ENCODE measurements at regions of chr11 and their contacts with region 1.

Region 1: DNA sequence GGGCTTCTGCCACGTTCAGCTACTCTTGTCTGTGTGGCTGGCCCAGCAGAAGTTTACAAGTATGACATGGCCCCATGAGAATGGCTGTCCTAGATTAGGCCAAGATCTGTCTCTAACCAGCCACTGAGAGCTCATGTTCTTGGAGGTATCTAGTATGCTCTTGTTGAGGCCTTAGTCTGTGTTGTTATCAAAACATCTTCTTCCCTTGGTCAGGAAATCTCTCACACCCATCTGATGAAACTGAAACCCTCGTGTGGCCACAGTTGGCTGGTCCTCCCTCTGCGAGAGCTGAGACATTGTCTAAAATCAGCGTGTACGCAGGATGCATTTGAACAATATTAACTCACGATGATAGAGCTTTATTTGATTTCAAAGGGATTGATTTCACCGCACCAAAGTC is 109.0 kb upstream of the NNMT start:
- DNase-seq: peak; percentile 84
- ATAC-seq: peak; percentile 82
- H3K4me3 ChIP-seq: peak overlapping the region in 2 of 5 experiments; percentile 10 to 17
- H3K4me3 Mint-ChIP-seq: peak overlapping the region; percentile 77
- H3K27ac ChIP-seq: peak overlapping the region; percentile 92 to 98
- H3K27ac Mint-ChIP-seq: peak overlapping the region; percentile 98
- H3K4me1 ChIP-seq: peaks cover 67 to 74% of the 10 kb centered on the region in 2 donors
- H3K4me1 Mint-ChIP-seq: peaks cover 73% of the 10 kb centered on the region
- H3K27me3 ChIP-seq: no peaks in the 10 kb centered on the region
- H3K27me3 Mint-ChIP-seq: no peaks in the 10 kb centered on the region
- CTCF ChIP-seq: no peak

Region 2: DNA sequence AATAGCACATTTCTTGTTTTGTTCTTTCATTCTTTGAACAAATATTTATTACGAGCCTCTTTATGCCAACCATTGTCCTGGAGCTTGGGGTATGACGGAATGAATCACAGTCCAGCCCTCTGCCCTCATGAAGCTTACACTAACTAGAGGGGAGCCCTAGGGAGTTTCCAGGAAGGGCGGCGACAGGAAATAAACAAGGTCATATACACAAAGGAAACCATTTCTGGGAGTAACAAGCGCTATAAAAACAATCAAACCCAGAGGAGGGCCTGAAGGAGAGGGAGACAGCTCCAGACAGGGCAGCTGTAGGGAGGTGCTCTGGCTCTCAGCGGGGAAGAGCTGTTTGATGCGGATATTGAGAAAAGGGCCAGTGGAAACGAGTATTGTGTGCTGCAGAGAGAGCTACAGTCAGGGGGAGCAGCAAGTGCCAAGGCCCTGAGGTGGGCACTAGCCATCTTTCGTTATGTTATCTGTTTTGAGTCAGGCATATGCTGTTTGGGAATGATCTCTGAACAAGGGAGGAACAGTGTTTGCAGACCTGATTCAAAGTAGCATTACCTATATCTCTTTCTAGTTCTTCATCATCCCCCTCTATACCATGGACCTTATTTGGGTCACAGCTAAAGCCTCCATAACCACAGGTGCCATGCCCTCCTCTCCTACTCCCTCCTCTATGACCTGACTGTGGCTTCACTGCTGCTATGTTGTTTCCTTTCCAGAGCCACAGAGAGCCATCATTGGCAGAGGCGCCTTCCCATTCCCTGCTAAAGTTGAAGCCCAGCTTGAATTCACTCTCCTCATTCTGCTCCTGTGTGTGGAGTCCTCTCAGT is 142.9 kb before region 1 on chr11:
- CTCF ChIA-PET with region 1: no interaction called
- POLR2A ChIA-PET with region 1: no interaction called
- intact Hi-C with region 1: no loop called
- DNase-seq: no peak
- ATAC-seq: no peak
- H3K4me3 ChIP-seq: no peak overlapping the region
- H3K4me3 Mint-ChIP-seq: no peak overlapping the region
- H3K27ac ChIP-seq: no peak overlapping the region
- H3K27ac Mint-ChIP-seq: no peak overlapping the region
- H3K4me1 ChIP-seq: peaks cover 0 to 3% of the 10 kb centered on the region in 2 donors
- H3K4me1 Mint-ChIP-seq: peaks cover 7% of the 10 kb centered on the region
- H3K27me3 ChIP-seq: peaks cover 0 to 15% (median 0%) of the 10 kb centered on the region in 4 experiments
- H3K27me3 Mint-ChIP-seq: peaks cover 14% of the 10 kb centered on the region
- CTCF ChIP-seq: no peak

Region 3: DNA sequence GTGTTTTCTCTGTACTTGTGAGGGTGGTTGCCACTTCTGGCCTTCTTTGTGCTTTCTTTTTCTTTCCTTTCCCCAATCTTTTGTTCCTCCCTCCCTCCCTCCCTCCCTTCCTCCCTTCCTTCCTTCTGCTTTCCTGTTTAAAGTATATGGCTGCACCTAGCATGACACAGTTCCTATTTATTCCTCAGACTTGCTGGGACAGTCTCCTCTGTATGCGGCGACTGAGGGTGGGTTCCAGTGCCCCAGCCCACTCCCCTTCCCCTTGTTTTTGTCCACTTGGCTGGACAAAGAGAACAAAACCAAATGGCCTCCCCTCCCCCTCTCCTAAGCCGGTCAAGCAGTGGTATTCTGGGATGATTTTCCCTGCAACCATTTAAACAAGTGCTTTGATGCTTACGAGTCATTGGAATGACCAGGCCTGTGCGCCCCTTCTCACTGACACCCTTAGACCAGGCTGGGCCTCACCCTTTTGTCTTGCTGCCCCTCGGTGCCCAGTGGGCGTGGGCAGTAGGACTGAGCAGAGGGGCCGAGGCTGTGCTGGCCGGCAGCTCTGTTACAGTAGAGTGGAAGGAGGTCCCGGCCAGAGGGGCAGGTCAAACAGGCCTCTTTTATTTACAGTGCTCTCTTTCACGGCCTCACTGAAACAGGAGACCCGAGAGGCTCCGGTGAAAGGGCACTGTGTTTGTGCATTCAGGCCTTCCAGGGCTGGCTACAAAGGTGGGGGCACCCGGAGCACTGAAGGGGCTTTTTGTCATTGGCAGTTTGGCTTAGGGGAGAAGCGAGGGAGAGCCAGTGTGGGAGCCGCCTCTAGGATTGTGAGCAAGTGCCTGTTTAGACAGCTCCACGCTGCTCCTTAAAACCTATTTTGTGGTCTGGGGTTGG is 95.4 kb before region 1 on chr11:
- CTCF ChIA-PET with region 1: no interaction called
- POLR2A ChIA-PET with region 1: no interaction called
- intact Hi-C with region 1: no loop called
- DNase-seq: no peak
- ATAC-seq: no peak
- H3K4me3 ChIP-seq: no peak overlapping the region
- H3K4me3 Mint-ChIP-seq: no peak overlapping the region
- H3K27ac ChIP-seq: no peak overlapping the region
- H3K27ac Mint-ChIP-seq: no peak overlapping the region
- H3K4me1 ChIP-seq: peaks cover 2 to 7% of the 10 kb centered on the region in 2 donors
- H3K4me1 Mint-ChIP-seq: peaks cover 3% of the 10 kb centered on the region
- H3K27me3 ChIP-seq: no peaks in the 10 kb centered on the region
- H3K27me3 Mint-ChIP-seq: peaks cover 6% of the 10 kb centered on the region
- CTCF ChIP-seq: no peak

Region 4: DNA sequence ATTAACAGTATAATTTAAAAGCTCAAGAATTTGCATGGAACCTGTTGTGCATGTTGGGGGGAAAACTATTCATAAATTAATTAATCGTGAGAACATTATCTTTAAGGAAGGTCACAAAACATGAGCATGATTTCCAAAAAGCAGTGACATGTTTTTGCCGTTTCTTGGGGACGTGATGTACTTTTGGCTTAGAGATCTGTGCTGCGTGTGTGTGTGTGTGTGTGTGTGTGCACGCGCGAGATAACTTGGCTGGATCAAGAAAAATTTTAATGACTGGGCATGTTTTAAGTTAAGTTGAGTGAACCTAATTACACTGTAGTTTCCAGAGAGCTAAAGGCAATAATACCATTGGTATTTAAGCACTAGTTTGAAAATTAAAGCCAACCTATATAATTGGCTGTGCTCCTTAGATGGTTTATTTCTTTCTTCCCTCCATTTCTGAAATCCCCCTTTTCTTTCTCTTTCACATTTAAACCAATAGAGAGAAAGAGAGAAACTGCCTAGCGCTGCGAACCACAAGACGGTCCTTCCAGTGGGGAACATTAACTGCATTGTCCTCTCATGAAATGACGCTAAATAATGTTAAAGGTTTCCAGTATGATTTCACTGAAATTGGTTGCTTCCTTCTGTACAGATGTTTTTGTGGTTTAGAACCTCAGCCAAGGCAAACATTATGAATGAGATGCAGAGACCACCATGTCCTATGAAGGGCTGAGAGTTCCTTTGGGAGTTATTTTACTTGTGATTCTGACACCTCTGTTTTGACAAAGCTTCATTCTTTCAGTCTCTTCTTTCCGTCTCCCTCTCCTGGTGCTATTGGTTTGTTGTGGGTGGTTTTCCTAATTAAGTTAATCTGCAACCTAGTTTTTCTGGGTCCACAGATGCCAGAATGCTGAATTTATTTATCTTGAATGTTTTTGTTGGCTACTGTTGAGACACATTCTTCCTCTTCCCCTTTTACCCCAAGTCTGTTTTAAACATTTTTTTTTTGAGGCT is 75.9 kb before region 1 on chr11:
- CTCF ChIA-PET with region 1: no interaction called
- POLR2A ChIA-PET with region 1: no interaction called
- intact Hi-C with region 1: no loop called
- DNase-seq: peak; percentile 31
- ATAC-seq: no peak
- H3K4me3 ChIP-seq: peak overlapping the region in 3 of 5 experiments; percentile 34 to 45 (median 43)
- H3K4me3 Mint-ChIP-seq: peak overlapping the region; percentile 49
- H3K27ac ChIP-seq: no peak overlapping the region
- H3K27ac Mint-ChIP-seq: no peak overlapping the region
- H3K4me1 ChIP-seq: peaks cover 12 to 29% of the 10 kb centered on the region in 2 donors
- H3K4me1 Mint-ChIP-seq: peaks cover 19% of the 10 kb centered on the region
- H3K27me3 ChIP-seq: peaks cover 0 to 6% (median 3%) of the 10 kb centered on the region in 4 experiments
- H3K27me3 Mint-ChIP-seq: peaks cover 68% of the 10 kb centered on the region
- CTCF ChIP-seq: no peak

Region 5: GRCh38 chr11:114197799-114198500 is 10.8 kb after region 1 on chr11:
- CTCF ChIA-PET with region 1: interaction called, 13 read pairs
- POLR2A ChIA-PET with region 1: interaction called, 4 read pairs
- intact Hi-C with region 1: loop called (anchors 1 kb)
- DNase-seq: no peak
- ATAC-seq: no peak
- H3K4me3 ChIP-seq: no peak overlapping the region
- H3K4me3 Mint-ChIP-seq: no peak overlapping the region
- H3K27ac ChIP-seq: no peak overlapping the region
- H3K27ac Mint-ChIP-seq: peak overlapping the region; percentile 10
- H3K4me1 ChIP-seq: peaks cover 27 to 47% of the 10 kb centered on the region in 2 donors
- H3K4me1 Mint-ChIP-seq: peaks cover 39% of the 10 kb centered on the region
- H3K27me3 ChIP-seq: no peaks in the 10 kb centered on the region
- H3K27me3 Mint-ChIP-seq: no peaks in the 10 kb centered on the region
- CTCF ChIP-seq: no peak

Region 6: GRCh38 chr11:114208377-114208776 is 21.2 kb after region 1 on chr11:
- CTCF ChIA-PET with region 1: interaction called, 3 read pairs
- POLR2A ChIA-PET with region 1: interaction called, 7 read pairs
- intact Hi-C with region 1: loop called (anchors 2 kb)
- DNase-seq: peak; percentile 58
- ATAC-seq: peak; percentile 89
- H3K4me3 ChIP-seq: no peak overlapping the region
- H3K4me3 Mint-ChIP-seq: no peak overlapping the region
- H3K27ac ChIP-seq: no peak overlapping the region
- H3K27ac Mint-ChIP-seq: no peak overlapping the region
- H3K4me1 ChIP-seq: peaks cover 12 to 14% of the 10 kb centered on the region in 2 donors
- H3K4me1 Mint-ChIP-seq: peaks cover 15% of the 10 kb centered on the region
- H3K27me3 ChIP-seq: no peaks in the 10 kb centered on the region
- H3K27me3 Mint-ChIP-seq: peaks cover 3% of the 10 kb centered on the region
- CTCF ChIP-seq: no peak

Region 7: DNA sequence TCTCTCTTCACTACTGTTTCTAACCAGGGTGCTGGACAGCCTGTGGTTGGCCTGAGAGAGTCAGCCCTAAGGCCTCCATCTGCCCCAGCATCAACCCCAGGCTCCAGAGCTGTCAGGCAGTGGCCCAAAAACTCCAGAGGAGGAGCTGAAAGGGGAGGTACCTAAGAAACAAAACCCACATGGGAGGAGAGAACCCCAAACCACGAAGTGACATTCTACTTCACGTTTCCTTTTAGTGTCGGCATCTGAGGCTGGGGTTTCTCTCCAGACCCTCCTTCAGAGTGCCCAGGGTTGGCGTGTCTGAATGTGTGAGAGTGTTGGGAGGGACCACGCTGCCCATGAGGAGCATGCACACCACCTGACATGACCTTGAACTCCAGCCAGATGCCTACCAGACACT is 39.2 kb after region 1 on chr11:
- CTCF ChIA-PET with region 1: no interaction called
- POLR2A ChIA-PET with region 1: no interaction called
- intact Hi-C with region 1: no loop called
- DNase-seq: no peak
- ATAC-seq: no peak
- H3K4me3 ChIP-seq: no peak overlapping the region
- H3K4me3 Mint-ChIP-seq: no peak overlapping the region
- H3K27ac ChIP-seq: no peak overlapping the region
- H3K27ac Mint-ChIP-seq: no peak overlapping the region
- H3K4me1 ChIP-seq: no peaks in the 10 kb centered on the region
- H3K4me1 Mint-ChIP-seq: peaks cover 5% of the 10 kb centered on the region
- H3K27me3 ChIP-seq: no peaks in the 10 kb centered on the region
- H3K27me3 Mint-ChIP-seq: peaks cover 15% of the 10 kb centered on the region
- CTCF ChIP-seq: no peak

Region 8: DNA sequence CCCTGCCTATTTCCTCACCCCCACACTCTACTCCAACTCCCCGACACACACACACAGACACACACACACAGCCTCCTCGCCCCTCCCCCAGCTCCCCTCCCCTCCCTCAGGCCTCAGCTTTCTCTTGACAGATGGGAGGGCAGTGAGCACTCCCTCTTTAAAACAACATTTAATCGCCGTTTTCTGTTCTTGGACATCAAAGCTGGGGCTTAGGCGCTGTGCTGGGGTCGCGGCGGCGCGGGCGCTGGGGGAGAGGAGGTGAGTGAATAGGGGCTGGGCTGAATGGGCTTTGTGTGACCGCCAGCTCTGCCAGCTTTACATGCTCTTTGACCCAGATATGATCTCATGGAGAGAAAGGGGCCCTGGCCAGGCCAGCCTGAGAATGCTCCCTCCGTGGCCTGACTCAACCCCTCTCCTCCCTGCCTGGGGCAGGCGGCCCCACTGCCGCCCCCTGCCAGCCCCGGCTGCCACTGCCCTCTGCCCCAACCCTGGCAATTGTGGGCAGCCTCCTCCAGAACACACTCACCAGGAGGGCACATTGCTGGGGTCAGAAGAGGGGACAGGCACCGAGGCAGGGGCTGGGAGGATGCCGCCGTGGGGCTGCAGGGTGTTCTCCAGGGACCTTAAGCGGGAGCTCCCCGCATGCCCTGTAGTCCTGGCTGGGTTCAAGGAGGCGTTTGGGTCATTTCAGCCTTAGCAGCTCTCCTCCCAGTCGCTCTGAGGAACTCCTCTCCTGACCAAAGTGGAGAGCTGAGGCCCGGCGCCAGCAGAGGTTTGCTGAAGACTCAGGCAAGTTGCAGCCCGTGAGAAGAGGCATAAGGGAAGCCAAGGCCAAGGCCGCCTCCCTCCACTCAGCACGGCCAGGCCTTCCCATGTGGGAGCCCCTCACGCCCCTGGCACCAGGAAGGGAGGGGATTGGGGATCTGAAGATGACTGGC is 70.7 kb after region 1 on chr11:
- CTCF ChIA-PET with region 1: interaction called, 81 read pairs
- POLR2A ChIA-PET with region 1: interaction called, 4 read pairs
- intact Hi-C with region 1: loop called (anchors 2 kb)
- DNase-seq: no peak
- ATAC-seq: no peak
- H3K4me3 ChIP-seq: no peak overlapping the region
- H3K4me3 Mint-ChIP-seq: no peak overlapping the region
- H3K27ac ChIP-seq: peak overlapping the region; percentile 84 to 89
- H3K27ac Mint-ChIP-seq: peak overlapping the region; percentile 88
- H3K4me1 ChIP-seq: peaks cover 30 to 34% of the 10 kb centered on the region in 2 donors
- H3K4me1 Mint-ChIP-seq: peaks cover 32% of the 10 kb centered on the region
- H3K27me3 ChIP-seq: peaks cover 0 to 1% (median 0%) of the 10 kb centered on the region in 4 experiments
- H3K27me3 Mint-ChIP-seq: no peaks in the 10 kb centered on the region
- CTCF ChIP-seq: no peak